Activated T-helper 1 cell treated with anti-CD3 and anti-CD28 coated beads, Interleukin-12 subunit alpha, Interleukin-12 subunit beta, Interleukin-2, Interleukin-4 antibody, amounts not matched to agents 30 ng/mL and 10 ng/mL and 1 ng/mL, durations not matched to agents 14 hours and 24 hours and 36 hours (primary cell): ENCODE measurements at regions of chrX and their contacts with region 1.

Region 1: GRCh38 chrX:130079824-130080406 is 30.4 kb downstream of the ELF4 start:
- DNase-seq: peak; percentile 19
- H3K4me3 Mint-ChIP-seq: no peak overlapping the region
- H3K27ac Mint-ChIP-seq: peak overlapping the region; percentile 8
- H3K4me1 Mint-ChIP-seq: peaks cover 33% of the 10 kb centered on the region
- H3K27me3 Mint-ChIP-seq: no peaks in the 10 kb centered on the region

Region 2: GRCh38 chrX:129772796-129773431 is 307.0 kb before region 1 on chrX:
- intact Hi-C with region 1: loop called (anchors 10 kb)
- DNase-seq: peak; percentile 32
- H3K4me3 Mint-ChIP-seq: peak overlapping the region; percentile 37
- H3K27ac Mint-ChIP-seq: peak overlapping the region; percentile 95
- H3K4me1 Mint-ChIP-seq: peaks cover 50% of the 10 kb centered on the region
- H3K27me3 Mint-ChIP-seq: no peaks in the 10 kb centered on the region

Region 3: DNA sequence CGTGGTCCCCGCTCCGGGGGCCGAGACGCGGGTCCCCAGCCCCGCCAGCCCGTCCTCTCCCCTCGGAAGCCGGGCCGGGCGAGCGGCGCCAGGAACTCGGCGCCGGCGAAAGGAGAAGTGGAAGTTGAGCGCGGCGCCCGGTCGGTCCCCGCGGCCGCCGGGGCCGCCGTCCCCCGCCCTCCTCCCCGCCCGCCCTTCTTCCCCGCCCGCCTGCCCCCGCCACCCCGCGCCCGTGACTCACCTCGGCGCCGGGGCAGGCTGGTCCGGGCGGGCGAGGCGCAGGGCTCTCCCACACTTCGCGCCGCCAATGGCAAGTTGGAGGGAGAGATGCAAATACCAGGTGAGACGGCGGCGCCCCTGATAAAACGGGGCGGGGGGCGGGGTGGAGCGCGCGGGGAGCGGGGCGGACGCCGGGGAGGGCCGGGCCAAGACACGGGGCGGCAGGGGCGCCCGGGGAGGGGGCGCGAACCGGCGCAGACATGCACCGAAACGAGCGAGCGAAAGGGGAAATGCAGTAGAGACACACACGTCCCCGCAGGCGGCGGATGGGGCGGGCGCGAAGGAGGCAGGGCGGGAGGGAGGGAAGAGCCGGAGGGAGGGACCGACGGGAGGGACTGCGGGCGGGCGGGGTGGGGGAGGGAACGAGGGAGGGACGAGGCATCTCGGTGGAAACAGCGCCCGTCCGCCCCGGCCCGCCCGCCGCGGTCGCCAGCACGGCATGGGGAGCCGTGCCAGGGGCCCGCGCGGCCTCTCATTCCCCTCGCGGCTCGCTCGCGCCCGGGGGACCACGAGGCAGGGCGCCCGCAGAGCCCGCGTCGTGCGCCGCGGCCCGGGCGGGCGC is 30.7 kb after region 1 on chrX and contains the start of gene ELF4:
- intact Hi-C with region 1: loop called (anchors 1 kb)
- DNase-seq: peak; percentile 38
- H3K4me3 Mint-ChIP-seq: peak within 1 kb of the TSS; percentile 93
- H3K27ac Mint-ChIP-seq: peak within 1 kb of the TSS; percentile 92
- H3K4me1 Mint-ChIP-seq: peaks cover 21% of the 10 kb centered on the region
- H3K27me3 Mint-ChIP-seq: no peaks in the 10 kb centered on the region
- total RNA-seq, gene ELF4: 26.1 and 26.6 TPM in 2 replicates

Region 4: GRCh38 chrX:130173190-130173895 is 93.4 kb after region 1 on chrX:
- intact Hi-C with region 1: loop called (anchors 1 kb)
- DNase-seq: peak; percentile 17
- H3K4me3 Mint-ChIP-seq: peak overlapping the region; percentile 94
- H3K27ac Mint-ChIP-seq: peak overlapping the region; percentile 91
- H3K4me1 Mint-ChIP-seq: peaks cover 50% of the 10 kb centered on the region
- H3K27me3 Mint-ChIP-seq: no peaks in the 10 kb centered on the region

Region 5: GRCh38 chrX:130339408-130340222 is 259.7 kb after region 1 on chrX and contains the start of gene SLC25A14:
- intact Hi-C with region 1: loop called (anchors 5 kb)
- DNase-seq: peak; percentile 69
- H3K4me3 Mint-ChIP-seq: peak within 1 kb of the TSS; percentile 94
- H3K27ac Mint-ChIP-seq: peak within 1 kb of the TSS; percentile 96
- H3K4me1 Mint-ChIP-seq: peaks cover 15% of the 10 kb centered on the region
- H3K27me3 Mint-ChIP-seq: peaks cover 2% of the 10 kb centered on the region
- total RNA-seq, gene SLC25A14: 8.1 and 10.5 TPM in 2 replicates

Region 6: GRCh38 chrX:130975947-130976346 is 896.0 kb after region 1 on chrX:
- intact Hi-C with region 1: no loop called
- DNase-seq: no peak
- H3K4me3 Mint-ChIP-seq: no peak overlapping the region
- H3K27ac Mint-ChIP-seq: no peak overlapping the region
- H3K4me1 Mint-ChIP-seq: no peaks in the 10 kb centered on the region
- H3K27me3 Mint-ChIP-seq: peaks cover 4% of the 10 kb centered on the region

Region 7: GRCh38 chrX:131830400-131831184 is 1750.7 kb after region 1 on chrX:
- intact Hi-C with region 1: loop called (anchors 10 kb)
- DNase-seq: peak; percentile 40
- H3K4me3 Mint-ChIP-seq: peak overlapping the region; percentile 95
- H3K27ac Mint-ChIP-seq: peak overlapping the region; percentile 91
- H3K4me1 Mint-ChIP-seq: peaks cover 34% of the 10 kb centered on the region
- H3K27me3 Mint-ChIP-seq: no peaks in the 10 kb centered on the region